ENCODE measurements at regions of chr1 and their contacts with region 1.

Region 1: DNA sequence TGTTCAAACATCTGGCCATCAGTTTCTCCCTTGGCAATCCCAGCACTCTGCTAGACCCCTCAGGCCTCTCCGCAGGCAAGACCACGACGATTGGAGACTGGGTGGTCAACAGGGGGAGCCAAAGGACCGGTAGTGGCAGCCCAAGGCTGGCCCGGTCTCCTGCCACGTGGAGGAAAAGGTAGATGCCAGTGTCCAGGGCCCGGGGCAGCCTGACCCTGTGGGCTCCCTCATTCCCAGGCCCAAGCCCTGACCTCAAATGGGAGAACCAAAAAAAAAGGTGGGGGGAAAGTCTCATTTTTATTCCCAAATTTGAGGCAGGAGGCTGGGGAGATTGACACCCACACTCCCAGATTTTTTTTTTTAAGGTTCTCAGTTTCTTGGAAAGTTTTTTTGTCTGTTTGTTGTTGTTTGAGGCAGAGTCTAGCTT is 24.8 kb downstream of the S100A6 start:
- DNase-seq: peak; percentile 42
- H3K4me3 ChIP-seq: no peak overlapping the region
- H3K27ac ChIP-seq: no peak overlapping the region
- H3K27me3 ChIP-seq: no peaks in the 10 kb centered on the region
- CTCF ChIP-seq: peak; percentile 98

Region 2: DNA sequence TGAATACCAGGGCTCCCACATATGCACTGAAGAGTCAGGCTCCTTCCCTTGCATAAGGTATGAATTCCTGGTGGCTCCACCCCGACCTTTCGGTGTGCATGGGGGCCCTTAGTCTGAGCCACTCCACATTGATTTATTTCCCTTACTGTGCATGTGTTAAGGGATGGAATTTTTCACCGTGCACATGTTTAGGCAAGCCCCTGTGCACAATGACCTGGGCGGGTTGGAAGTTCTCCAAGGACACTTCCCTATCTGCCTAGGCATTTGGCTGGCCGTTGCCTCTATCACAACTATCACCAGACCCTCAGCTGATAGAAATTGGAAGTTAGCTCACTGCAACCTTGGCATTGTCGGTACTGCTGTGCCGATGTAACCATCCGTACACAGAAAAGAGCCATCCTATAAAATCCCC is 15.1 kb after region 1 on chr1:
- CTCF ChIA-PET with region 1: interaction called, 37 read pairs
- POLR2A ChIA-PET with region 1: no interaction called
- DNase-seq: no peak
- H3K4me3 ChIP-seq: no peak overlapping the region
- H3K27ac ChIP-seq: no peak overlapping the region
- H3K27me3 ChIP-seq: no peaks in the 10 kb centered on the region
- CTCF ChIP-seq: no peak

Region 3: DNA sequence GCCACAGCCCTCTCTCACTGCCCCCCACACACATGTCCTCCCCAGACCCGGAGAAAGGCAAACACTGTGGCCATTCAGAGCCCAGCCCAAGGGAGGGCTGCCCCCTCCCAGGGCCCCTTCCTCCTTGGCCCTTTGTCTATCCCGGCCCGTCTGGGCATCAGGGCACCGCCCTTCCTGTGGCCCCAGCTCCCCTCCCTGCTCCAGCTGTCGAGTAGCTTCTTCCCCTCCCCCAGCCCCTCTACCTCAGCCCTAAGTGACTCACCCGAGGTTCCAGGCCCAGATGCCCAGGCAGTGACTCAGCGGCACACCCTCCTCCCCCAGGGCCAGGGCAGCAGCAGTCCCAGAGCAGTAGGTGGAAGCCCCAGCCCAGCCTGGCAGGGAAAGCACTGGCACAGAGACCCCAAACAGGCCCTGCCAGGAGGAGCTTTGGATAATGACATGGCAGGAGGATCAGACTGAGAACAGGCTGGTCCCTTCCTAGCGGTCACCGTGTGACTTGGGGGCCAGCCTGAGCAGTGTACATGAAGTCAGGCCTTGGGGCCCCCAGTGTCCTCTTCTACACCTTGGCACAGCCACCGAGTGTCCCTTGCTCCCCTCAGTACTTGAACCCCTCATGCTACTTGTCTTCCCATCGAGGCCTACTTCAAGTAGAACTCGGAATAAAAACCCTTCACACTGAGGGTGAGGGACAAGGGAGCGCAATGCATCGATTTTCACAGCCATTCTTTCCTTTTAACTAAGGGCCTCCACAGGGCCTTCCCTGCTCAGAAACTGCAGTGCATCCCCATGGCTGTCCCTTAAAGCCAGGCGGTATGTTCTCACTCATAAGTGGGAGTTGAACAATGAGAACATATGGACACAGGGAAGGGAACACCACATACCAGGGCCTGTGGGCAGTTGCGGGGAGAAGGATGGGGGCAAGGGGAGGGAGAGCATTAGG is 55.7 kb after region 1 on chr1:
- CTCF ChIA-PET with region 1: interaction called, 163 read pairs
- POLR2A ChIA-PET with region 1: interaction called, 23 read pairs
- DNase-seq: peak; percentile 98
- H3K4me3 ChIP-seq: no peak overlapping the region
- H3K27ac ChIP-seq: peak overlapping the region; percentile 100
- H3K27me3 ChIP-seq: no peaks in the 10 kb centered on the region
- CTCF ChIP-seq: no peak

Region 4: GRCh38 chr1:153626922-153627796 is 116.2 kb after region 1 on chr1 and contains the start of gene S100A13:
- CTCF ChIA-PET with region 1: interaction called, 30 read pairs
- POLR2A ChIA-PET with region 1: interaction called, 5 read pairs
- DNase-seq: peak; percentile 92
- H3K4me3 ChIP-seq: peak within 1 kb of the TSS; percentile 80
- H3K27ac ChIP-seq: peak within 1 kb of the TSS; percentile 92
- H3K27me3 ChIP-seq: no peaks in the 10 kb centered on the region
- CTCF ChIP-seq: peak; percentile 78
- polyA plus RNA-seq, gene S100A13: 310 and 323 TPM in 2 replicates

Region 5: DNA sequence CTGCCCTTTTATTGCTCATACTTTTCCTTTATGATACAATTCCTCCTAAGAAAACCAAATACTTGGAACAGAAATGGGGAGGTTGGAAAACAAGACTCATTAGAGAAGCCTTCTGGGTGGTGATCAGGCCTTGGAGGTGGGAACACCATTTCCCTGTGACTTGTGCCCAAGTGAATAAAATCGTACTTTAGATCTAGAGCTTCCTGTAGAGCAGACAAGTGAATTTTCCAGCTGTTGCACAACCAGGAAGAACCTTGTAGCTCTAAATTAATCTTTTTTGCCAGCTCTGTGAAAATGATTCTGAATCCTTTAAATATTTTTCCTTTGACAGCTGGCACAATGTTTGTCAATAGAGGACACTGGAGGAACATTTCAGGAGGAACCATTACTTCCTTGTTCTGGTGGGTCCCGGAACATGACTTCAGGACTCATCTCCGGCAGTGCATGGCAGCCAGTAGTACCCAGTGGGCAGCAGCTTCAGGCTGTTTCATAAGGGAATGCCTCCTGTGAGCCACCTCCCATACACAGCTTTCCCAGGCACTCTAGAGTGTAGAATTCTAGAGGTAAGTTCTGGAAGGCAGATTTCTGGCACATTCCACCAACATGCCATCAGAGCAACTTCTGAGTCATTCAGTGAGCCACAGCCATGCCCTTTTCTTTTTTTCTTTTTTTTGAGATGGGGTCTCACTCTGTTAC is 142.0 kb after region 1 on chr1:
- CTCF ChIA-PET with region 1: interaction called, 13 read pairs
- POLR2A ChIA-PET with region 1: no interaction called
- DNase-seq: no peak
- H3K4me3 ChIP-seq: no peak overlapping the region
- H3K27ac ChIP-seq: no peak overlapping the region
- H3K27me3 ChIP-seq: no peaks in the 10 kb centered on the region
- CTCF ChIP-seq: no peak

Measured in AG04450 (cell line).